Activated CD8-positive, alpha-beta memory T cell treated with anti-CD3 and anti-CD28 coated beads, Interleukin-2, amount 10 ng/mL, durations not matched to agents 7 days and 5 days (primary cell): ENCODE measurements at regions of chr12 and their contacts with region 1.

Region 1: DNA sequence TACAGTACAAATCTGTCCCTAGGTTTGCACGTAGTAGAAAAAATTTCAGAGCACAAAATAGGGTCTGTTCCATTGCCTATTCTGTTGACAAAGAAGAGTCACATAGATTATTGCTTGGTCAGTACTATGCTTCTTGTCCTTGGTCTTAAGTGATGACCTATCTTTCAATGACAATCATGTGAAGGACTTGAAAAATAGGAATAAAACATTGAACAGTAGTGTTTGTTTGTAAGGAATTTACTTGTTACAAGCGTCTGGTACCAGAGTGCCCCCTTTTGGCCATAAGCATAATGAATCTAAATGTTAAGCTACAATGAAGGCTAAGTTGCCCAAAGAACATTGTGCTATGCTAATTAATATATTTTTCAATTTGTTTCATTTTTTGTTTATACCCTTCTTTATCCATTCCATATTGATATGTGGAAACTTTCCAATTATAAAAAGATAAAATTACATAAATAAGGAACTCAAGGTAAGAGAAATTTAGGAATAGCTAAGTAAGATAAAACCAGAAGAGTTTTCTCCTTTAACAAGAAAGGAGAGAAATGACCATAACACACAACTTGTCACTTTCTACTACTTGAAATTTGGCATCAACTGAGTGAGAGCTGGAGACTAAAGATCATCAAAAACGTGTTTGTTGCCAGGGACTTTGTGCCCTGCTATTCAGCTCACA is 204.7 kb downstream of the EPS8 start:
- DNase-seq: no peak
- ATAC-seq: peak; percentile 53
- H3K4me3 Mint-ChIP-seq: no peak overlapping the region
- H3K27ac Mint-ChIP-seq: no peak overlapping the region
- H3K4me1 Mint-ChIP-seq: peaks cover 9% of the 10 kb centered on the region
- H3K27me3 Mint-ChIP-seq: peaks cover 32% of the 10 kb centered on the region

Region 2: GRCh38 chr12:15276088-15276698 is 308.3 kb before region 1 on chr12:
- CTCF ChIA-PET with region 1: interaction called, 19 read pairs
- DNase-seq: no peak
- ATAC-seq: no peak
- H3K4me3 Mint-ChIP-seq: no peak overlapping the region
- H3K27ac Mint-ChIP-seq: no peak overlapping the region
- H3K4me1 Mint-ChIP-seq: peaks cover 16% of the 10 kb centered on the region
- H3K27me3 Mint-ChIP-seq: peaks cover 2% of the 10 kb centered on the region

Region 3: DNA sequence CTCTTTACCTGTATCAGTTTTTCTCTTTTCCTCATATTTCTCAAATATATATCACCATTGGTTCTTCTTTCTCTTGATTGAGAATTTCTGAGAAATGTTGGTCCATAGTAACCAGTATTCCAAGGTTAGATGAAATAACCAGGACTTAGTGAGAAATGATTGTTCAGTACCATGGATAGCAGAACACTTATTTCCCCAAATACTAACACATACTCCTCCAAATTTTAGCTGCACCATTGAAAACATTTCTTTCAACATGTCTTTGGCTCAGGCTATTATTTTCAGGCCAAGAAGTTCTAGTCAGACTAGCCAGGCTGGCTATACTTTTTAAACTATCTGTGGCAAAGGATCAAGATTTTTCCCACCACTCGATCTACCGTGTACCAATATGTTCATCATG is 148.9 kb before region 1 on chr12:
- CTCF ChIA-PET with region 1: no interaction called
- DNase-seq: no peak
- ATAC-seq: no peak
- H3K4me3 Mint-ChIP-seq: no peak overlapping the region
- H3K27ac Mint-ChIP-seq: no peak overlapping the region
- H3K4me1 Mint-ChIP-seq: no peaks in the 10 kb centered on the region
- H3K27me3 Mint-ChIP-seq: no peaks in the 10 kb centered on the region

Region 4: GRCh38 chr12:15522565-15523187 is 61.8 kb before region 1 on chr12:
- CTCF ChIA-PET with region 1: interaction called, 312 read pairs
- DNase-seq: no peak
- ATAC-seq: no peak
- H3K4me3 Mint-ChIP-seq: no peak overlapping the region
- H3K27ac Mint-ChIP-seq: no peak overlapping the region
- H3K4me1 Mint-ChIP-seq: no peaks in the 10 kb centered on the region
- H3K27me3 Mint-ChIP-seq: peaks cover 38% of the 10 kb centered on the region

Region 5: GRCh38 chr12:15563663-15564062 is 20.8 kb before region 1 on chr12:
- CTCF ChIA-PET with region 1: interaction called, 17 read pairs
- DNase-seq: no peak
- ATAC-seq: peak; percentile 63
- H3K4me3 Mint-ChIP-seq: peak overlapping the region; percentile 63
- H3K27ac Mint-ChIP-seq: peak overlapping the region; percentile 83
- H3K4me1 Mint-ChIP-seq: peaks cover 51% of the 10 kb centered on the region
- H3K27me3 Mint-ChIP-seq: peaks cover 7% of the 10 kb centered on the region

Region 6: GRCh38 chr12:15601210-15601800 is 16.8 kb after region 1 on chr12:
- CTCF ChIA-PET with region 1: no interaction called
- DNase-seq: no peak
- ATAC-seq: no peak
- H3K4me3 Mint-ChIP-seq: no peak overlapping the region
- H3K27ac Mint-ChIP-seq: no peak overlapping the region
- H3K4me1 Mint-ChIP-seq: no peaks in the 10 kb centered on the region
- H3K27me3 Mint-ChIP-seq: no peaks in the 10 kb centered on the region